Left cardiac atrium (tissue), 4 donors: ENCODE measurements at regions of chr21 and their contacts with region 1.

Region 1: GRCh38 chr21:37338671-37339551 is 27.7 kb upstream of the DYRK1A start:
- DNase-seq: peak; percentile 66
- ATAC-seq: peak; percentile 95 to 99

Region 2: DNA sequence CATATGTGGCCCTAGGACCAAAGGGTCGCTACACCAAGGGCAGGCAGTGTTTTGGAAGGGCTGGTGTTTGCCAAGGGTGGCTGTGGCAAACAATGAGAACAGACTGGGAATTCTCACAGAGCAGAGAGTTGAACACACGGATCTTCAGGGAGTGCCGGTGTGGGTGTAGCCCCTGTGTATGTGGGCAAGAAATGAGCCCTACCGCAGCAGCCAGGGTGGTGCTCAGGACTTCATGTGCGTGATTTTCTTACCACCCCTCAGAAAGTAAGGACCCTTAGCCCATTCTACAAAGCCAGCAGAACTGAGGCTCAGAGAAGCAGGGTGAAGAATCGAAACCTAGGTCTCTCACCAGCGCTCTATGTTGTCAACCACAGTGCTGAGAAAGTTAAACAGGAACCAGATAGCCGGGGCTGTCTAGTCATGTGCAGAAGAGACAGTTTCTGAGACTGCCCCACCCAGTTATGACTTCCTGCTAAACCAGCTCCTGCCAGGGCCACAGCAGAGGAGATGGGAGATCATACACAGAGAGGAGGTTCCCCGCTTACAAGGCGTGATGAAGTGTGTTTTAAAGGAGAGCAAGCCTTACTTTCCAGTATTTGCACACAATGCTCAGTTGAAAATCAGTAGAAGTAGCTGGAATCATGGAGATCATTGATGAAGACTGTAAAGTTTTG is 1040.9 kb before region 1 on chr21:
- intact Hi-C with region 1: no loop called
- DNase-seq: peak; percentile 34
- ATAC-seq: peak; percentile 84 to 94

Region 3: GRCh38 chr21:37267269-37268184 is 71.4 kb before region 1 on chr21 and contains the start of gene VPS26C:
- intact Hi-C with region 1: loop called in 1 of 2 experiments (anchors 2 kb)
- DNase-seq: peak; percentile 99
- ATAC-seq: peak; percentile 95 to 97
- total RNA-seq, gene VPS26C: 35.0 to 43.6 TPM

Region 4: DNA sequence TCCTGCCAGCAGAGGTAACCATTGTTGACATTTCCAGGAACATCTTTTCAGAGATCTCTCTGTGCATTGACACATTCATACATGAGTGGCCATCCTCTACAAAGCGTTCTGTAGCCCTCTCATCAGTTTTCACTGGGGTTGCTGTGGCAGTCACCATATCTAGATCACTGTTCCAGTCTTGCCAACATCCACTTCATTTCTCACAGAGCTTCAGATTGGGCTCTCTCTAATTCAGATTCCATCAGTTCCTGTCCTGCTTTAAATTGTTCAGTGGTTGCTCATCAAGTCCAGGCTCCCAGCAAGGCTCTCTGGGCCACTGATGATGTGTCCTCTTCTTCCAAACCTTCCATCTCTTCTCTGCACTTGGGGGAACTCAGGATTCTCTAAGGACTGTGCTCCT is 403.6 kb after region 1 on chr21:
- intact Hi-C with region 1: no loop called
- DNase-seq: no peak
- ATAC-seq: peak in 1 of 2 donors; percentile 54

Region 5: GRCh38 chr21:38095220-38095619 is 756.3 kb after region 1 on chr21:
- intact Hi-C with region 1: no loop called
- DNase-seq: no peak
- ATAC-seq: no peak